Panc1 (cell line): ENCODE measurements at regions of chr1 and their contacts with region 1.

Region 1: DNA sequence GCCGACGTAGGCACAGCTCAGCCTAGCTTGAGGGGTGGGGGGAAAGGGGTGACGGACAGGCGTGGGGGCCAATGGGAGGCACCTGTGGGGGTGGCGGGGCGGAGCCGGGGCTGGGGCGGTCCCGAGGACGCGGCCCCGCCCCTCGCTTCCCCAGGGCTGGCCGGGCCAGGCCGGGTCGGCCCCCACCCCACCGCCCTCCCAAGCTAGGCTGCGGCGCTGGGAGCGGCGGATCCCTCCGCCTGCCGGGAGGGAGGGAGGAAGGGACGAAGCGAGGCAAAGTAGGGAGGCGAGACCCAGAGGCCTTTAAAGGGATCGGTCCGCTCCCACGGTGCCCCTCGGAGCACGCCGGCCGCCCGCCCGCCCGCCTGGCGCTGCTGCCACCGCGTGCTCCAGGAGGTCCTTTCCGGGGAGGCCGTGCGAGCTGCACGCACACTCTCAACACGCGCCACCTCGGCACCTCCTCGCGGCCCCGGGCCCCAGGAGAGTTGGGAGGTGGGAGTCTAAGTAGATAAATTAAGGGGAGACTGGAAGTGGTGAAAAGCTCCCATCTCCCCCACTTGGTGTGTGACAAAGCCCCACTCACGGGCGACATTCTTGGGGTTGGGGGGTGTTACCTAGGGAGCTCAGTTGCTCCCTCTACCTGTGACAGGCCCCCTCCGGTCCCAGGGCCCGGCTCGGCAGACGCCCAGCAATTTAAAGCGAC is 373 bp upstream of the MEF2D start:
- DNase-seq: peak; percentile 76
- ATAC-seq: peak; percentile 82
- H3K4me3 ChIP-seq: peak overlapping the region; percentile 69 to 98
- H3K27ac ChIP-seq: peak overlapping the region; percentile 92
- H3K4me1 ChIP-seq: peaks cover 64% of the 10 kb centered on the region
- H3K27me3 ChIP-seq: no peaks in the 10 kb centered on the region
- CTCF ChIP-seq: peak; percentile 85; the same call in 1 of the 2 replicates

Region 2: DNA sequence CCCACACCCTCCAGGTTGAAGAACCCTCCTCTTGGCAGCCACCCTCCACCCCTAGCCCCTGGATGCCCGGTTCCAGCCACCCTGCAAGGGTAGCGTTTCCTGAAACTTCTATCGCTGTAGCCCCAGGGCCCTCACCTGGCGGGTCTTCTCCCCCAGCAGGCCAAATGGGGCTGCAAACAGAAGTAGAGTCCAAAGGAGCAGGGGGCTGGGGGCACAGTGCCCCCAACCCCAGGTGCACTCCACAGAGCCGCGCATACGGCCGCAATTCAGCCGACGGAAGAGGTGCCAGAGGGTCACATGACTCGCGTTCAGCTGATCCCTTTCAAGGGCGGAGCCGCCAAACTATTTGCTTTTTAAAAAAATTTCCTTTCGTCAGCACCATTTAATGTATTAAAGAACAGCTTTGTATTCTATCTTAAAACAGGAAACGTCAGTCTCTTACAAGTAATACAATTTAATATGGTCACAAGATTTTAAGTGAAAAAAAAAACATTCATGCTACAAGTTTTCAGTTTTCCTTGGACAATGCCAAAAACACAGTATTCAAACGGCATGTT is 205.5 kb before region 1 on chr1 and contains the start of gene GLMP:
- CTCF ChIA-PET with region 1: no interaction called
- POLR2A ChIA-PET with region 1: no interaction called
- in situ Hi-C with region 1: no loop called
- intact Hi-C with region 1: no loop called
- DNase-seq: no peak
- ATAC-seq: 0 out of 2 replicates have a peak, but pooled peaks have one; percentile 23
- H3K4me3 ChIP-seq: peak within 1 kb of the TSS; percentile 57 to 86
- H3K27ac ChIP-seq: peak within 1 kb of the TSS; percentile 87
- H3K4me1 ChIP-seq: peaks cover 18% of the 10 kb centered on the region
- H3K27me3 ChIP-seq: no peaks in the 10 kb centered on the region
- CTCF ChIP-seq: no peak
- total RNA-seq, gene GLMP: 60.2 TPM

Region 3: GRCh38 chr1:156371553-156372264 is 129.2 kb before region 1 on chr1:
- CTCF ChIA-PET with region 1: no interaction called
- POLR2A ChIA-PET with region 1: interaction called, 12 read pairs
- in situ Hi-C with region 1: no loop called
- intact Hi-C with region 1: no loop called
- DNase-seq: no peak
- ATAC-seq: no peak
- H3K4me3 ChIP-seq: no peak overlapping the region
- H3K27ac ChIP-seq: no peak overlapping the region
- H3K4me1 ChIP-seq: peaks cover 5% of the 10 kb centered on the region; the same call in 1 of the 2 replicates
- H3K27me3 ChIP-seq: no peaks in the 10 kb centered on the region
- CTCF ChIP-seq: no peak

Region 4: DNA sequence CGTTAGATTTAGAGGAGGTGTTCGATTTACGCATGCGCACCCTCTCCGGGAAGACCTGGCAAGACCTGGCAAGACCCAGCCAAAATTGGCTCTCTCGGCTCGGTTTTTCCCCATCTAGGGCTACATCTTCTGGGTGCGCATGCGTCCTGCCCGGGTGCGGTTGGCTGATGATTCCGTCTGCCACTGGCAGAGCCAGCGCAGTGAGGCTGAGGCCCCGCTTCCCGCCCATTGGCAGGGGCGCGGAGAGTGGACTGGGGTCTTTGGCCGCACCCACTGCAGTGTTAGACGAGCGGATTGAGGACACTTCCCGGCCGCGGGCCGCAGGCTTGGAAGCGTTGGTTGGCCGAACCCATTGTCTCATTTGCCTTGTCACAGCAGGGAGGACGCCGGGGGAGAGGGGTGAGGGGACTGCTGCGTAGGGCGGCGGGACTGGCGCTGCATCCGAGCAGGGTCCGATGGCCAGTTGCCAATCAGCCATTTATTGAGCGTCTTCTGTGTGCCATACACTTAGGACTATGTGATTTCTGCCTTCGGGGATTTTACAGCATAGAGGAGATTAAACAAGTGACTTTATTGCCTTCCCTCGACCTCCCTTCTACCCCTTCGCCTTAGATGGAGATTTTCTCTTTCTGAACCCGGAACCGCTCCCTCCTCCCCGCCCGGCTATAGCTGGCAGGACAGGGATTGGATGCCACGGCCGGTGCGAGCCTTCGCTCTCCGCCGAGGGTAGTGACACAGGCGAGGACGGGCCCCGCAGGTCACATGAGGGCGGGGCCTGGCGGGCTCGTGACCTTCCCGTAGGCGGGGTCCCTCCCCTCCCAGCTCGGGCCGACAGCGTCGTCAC is 44.1 kb before region 1 on chr1:
- CTCF ChIA-PET with region 1: interaction called, 25 read pairs
- POLR2A ChIA-PET with region 1: interaction called, 3 read pairs
- in situ Hi-C with region 1: no loop called
- intact Hi-C with region 1: no loop called
- DNase-seq: peak; percentile 95
- ATAC-seq: peak; percentile 93
- H3K4me3 ChIP-seq: peak overlapping the region; percentile 70 to 83
- H3K27ac ChIP-seq: peak overlapping the region; percentile 98
- H3K4me1 ChIP-seq: peaks cover 7% of the 10 kb centered on the region; the same call in 1 of the 2 replicates
- H3K27me3 ChIP-seq: no peaks in the 10 kb centered on the region
- CTCF ChIP-seq: no peak; the same call in none of the 2 replicates